PC-3 (cell line): ENCODE measurements at regions of chr6 and their contacts with region 1.

Region 1: DNA sequence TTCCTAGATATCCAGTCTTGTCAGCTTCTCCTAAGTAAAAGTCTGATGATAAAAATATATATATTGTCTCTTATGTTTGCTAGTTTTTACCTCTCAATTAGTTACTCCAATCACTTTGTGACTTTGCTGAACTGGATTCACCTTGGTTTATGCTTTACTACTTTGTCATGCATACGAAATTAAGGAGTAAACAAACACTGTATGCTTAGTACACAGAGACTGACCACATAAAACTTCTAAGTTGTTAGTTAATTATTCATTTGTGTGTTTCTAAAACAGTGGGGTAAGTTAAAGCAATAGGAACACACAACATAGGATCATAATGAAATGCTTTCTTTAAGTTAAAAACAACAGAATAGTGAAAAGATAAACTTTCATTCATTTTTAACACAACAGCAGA is 877.3 kb upstream of the MAP3K7 start:
- DNase-seq: no peak
- ATAC-seq: no peak
- H3K4me3 ChIP-seq: no peak overlapping the region
- H3K27ac ChIP-seq: no peak overlapping the region
- H3K4me1 ChIP-seq: no peaks in the 10 kb centered on the region
- H3K27me3 ChIP-seq: no peaks in the 10 kb centered on the region
- CTCF ChIP-seq: no peak

Region 2: GRCh38 chr6:91600561-91600960 is 136.4 kb after region 1 on chr6:
- CTCF ChIA-PET with region 1: no interaction called
- POLR2A ChIA-PET with region 1: no interaction called
- intact Hi-C with region 1: no loop called
- DNase-seq: no peak
- ATAC-seq: no peak
- H3K4me3 ChIP-seq: no peak overlapping the region
- H3K27ac ChIP-seq: no peak overlapping the region
- H3K4me1 ChIP-seq: peaks cover 7% of the 10 kb centered on the region; the same call in 1 of the 2 replicates
- H3K27me3 ChIP-seq: no peaks in the 10 kb centered on the region
- CTCF ChIP-seq: no peak

Region 3: DNA sequence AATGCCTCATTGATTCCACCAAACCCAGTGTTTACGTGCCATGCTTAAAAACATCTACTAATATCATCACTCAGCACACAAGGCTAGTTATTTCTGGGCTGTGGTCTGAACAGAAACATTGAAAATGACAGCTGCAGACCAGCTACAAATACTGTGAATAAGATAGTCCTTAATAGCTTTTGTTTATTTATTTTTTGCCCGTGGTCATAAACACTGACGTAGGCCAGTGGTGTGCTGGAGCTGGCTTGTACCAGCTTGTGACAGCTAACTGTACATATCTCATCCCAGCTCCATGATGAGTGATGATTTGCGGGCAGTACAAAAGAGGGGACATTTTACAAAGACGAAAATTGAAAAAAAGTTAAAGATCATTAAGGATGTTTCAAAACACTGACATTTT is 898.2 kb after region 1 on chr6:
- CTCF ChIA-PET with region 1: no interaction called
- POLR2A ChIA-PET with region 1: interaction called, 17 read pairs
- intact Hi-C with region 1: no loop called
- DNase-seq: no peak
- ATAC-seq: no peak
- H3K4me3 ChIP-seq: no peak overlapping the region
- H3K27ac ChIP-seq: no peak overlapping the region
- H3K4me1 ChIP-seq: no peaks in the 10 kb centered on the region
- H3K27me3 ChIP-seq: no peaks in the 10 kb centered on the region
- CTCF ChIP-seq: no peak